ENCODE measurements at regions of chr3 and their contacts with region 1.

Region 1: DNA sequence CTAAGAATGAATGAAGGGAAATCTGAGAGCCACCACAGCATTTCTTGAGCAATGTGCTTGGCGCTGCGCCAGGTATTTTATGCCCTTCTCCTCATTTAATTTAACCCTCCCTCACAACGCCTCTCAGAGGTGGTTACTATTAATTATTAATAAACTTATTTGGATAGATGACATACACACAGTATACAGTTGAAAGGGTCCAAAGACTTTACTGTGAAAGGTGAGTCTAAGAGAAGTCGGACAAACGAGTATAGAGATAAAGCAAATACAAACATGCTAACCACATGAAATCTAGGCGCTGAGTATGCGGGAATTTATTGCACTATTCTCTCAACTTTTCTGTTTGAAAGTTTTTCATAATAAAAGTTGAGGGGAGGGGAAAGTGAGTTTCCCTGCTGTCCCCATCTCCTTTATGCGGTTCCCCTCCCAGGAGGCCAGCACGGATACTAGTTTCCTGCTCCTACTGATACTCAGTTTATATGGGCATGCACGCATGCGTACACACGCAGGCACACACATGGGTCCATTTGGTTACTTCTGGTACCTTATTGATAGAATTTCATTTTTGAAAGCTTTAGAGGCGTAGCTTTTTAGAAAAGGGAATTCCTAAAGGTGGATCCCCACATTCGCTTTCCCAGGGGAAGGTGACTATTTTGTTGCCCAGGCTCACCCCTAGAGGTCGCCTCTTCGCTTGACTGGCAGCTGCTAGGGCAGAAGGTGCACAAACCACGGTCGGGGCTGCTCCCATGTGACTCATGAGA is 28.5 kb upstream of the KCTD6 start:
- DNase-seq: peak; percentile 55
- H3K4me3 ChIP-seq: no peak overlapping the region
- H3K27ac ChIP-seq: no peak overlapping the region
- H3K27me3 ChIP-seq: no peaks in the 10 kb centered on the region
- CTCF ChIP-seq: peak; percentile 89

Region 2: DNA sequence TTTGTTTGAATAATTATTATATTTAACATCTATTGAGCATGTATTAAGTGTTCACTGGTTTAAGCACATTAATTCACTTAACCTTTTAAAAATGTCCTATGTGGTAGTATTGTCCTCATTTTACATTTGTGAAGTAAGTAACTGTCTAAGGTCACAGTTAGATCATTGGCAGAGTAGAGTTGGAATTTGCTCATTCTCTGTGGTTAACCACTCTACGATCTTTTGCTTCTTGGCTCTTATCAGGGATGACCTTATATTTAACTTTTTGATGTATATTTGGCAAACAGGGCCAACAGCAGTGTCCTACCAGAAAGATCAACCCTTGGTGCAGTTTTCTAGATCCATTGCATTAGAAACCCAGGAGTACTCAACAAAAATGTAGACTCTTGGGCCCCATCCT is 96.7 kb before region 1 on chr3:
- CTCF ChIA-PET with region 1: no interaction called
- POLR2A ChIA-PET with region 1: no interaction called
- DNase-seq: no peak
- H3K4me3 ChIP-seq: no peak overlapping the region
- H3K27ac ChIP-seq: no peak overlapping the region
- H3K27me3 ChIP-seq: no peaks in the 10 kb centered on the region
- CTCF ChIP-seq: no peak

Region 3: GRCh38 chr3:58452176-58452575 is 11.2 kb before region 1 on chr3:
- CTCF ChIA-PET with region 1: interaction called, 12 read pairs
- POLR2A ChIA-PET with region 1: no interaction called
- DNase-seq: no peak
- H3K4me3 ChIP-seq: no peak overlapping the region
- H3K27ac ChIP-seq: no peak overlapping the region
- H3K27me3 ChIP-seq: peaks cover 3% of the 10 kb centered on the region
- CTCF ChIP-seq: no peak

Region 4: GRCh38 chr3:58491506-58492402 is 28.4 kb after region 1 on chr3 and contains the start of gene KCTD6:
- CTCF ChIA-PET with region 1: interaction called, 12 read pairs
- POLR2A ChIA-PET with region 1: no interaction called
- DNase-seq: peak; percentile 80
- H3K4me3 ChIP-seq: peak within 1 kb of the TSS; percentile 84
- H3K27ac ChIP-seq: no peak within 1 kb of the TSS
- H3K27me3 ChIP-seq: no peaks in the 10 kb centered on the region
- CTCF ChIP-seq: peak; percentile 59
- polyA plus RNA-seq, gene KCTD6: 9.6 and 13.7 TPM in 2 replicates

Region 5: GRCh38 chr3:58497097-58497496 is 33.7 kb after region 1 on chr3:
- CTCF ChIA-PET with region 1: interaction called, 12 read pairs
- POLR2A ChIA-PET with region 1: no interaction called
- DNase-seq: no peak
- H3K4me3 ChIP-seq: no peak overlapping the region
- H3K27ac ChIP-seq: no peak overlapping the region
- H3K27me3 ChIP-seq: no peaks in the 10 kb centered on the region
- CTCF ChIP-seq: no peak